Dorsolateral prefrontal cortex (tissue), 120 donors: ENCODE measurements at regions of chr2 and their contacts with region 1.

Region 1: DNA sequence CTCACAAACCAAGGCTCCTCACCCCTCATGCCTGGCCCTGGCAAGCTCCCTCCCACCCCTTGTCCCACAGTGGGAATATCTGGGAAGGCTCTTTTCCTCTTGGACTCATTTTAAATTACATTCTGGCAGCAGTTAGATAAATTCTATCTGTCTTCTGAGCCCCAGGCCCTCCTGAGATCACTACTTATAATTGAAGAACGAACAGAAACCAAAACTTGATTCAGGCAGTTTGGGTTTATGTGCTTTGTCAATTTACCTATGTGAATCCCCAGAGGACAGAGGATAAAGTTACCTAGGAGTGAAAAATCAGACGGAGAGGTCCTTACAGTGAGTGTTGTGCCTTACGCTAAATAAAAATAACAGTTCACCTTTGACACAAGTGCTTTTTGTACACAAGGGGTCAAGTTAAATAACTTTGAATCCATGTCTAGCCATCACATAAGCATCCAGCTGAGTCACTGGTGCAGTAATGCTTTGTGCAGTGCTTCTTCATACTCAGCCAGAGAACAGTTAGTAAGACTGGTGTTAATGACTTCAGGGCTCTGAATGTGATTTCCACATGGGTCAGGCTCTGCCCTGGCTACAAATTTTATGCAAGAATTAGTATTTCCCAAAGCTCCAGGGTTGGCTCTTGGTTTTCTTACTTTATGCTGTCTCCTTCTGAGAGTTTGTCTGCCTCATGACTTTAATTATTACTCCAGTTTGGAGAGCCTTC is 329.3 kb downstream of the INSIG2 start:
- DNase-seq: no peak
- H3K4me3 ChIP-seq: no peak overlapping the region
- H3K27ac ChIP-seq: no peak overlapping the region
- H3K27me3 ChIP-seq: peaks cover 0 to 11% (median 0%) of the 10 kb centered on the region in 45 donors
- CTCF ChIP-seq: no peak

Region 2: GRCh38 chr2:118292991-118293390 is 124.6 kb before region 1 on chr2:
- intact Hi-C with region 1: no loop called
- DNase-seq: no peak
- H3K4me3 ChIP-seq: no peak overlapping the region
- H3K27ac ChIP-seq: no peak overlapping the region
- H3K27me3 ChIP-seq: peaks cover 0 to 20% (median 0%) of the 10 kb centered on the region in 45 donors
- CTCF ChIP-seq: no peak

Region 3: GRCh38 chr2:118363604-118364003 is 54.0 kb before region 1 on chr2:
- intact Hi-C with region 1: loop called in 1 of 2 experiments (anchors 2 kb)
- DNase-seq: no peak
- H3K4me3 ChIP-seq: no peak overlapping the region
- H3K27ac ChIP-seq: no peak overlapping the region
- H3K27me3 ChIP-seq: peaks cover 0 to 12% (median 0%) of the 10 kb centered on the region in 45 donors
- CTCF ChIP-seq: no peak